PC-3 (cell line): ENCODE measurements at regions of chr9 and their contacts with region 1.

Region 1: DNA sequence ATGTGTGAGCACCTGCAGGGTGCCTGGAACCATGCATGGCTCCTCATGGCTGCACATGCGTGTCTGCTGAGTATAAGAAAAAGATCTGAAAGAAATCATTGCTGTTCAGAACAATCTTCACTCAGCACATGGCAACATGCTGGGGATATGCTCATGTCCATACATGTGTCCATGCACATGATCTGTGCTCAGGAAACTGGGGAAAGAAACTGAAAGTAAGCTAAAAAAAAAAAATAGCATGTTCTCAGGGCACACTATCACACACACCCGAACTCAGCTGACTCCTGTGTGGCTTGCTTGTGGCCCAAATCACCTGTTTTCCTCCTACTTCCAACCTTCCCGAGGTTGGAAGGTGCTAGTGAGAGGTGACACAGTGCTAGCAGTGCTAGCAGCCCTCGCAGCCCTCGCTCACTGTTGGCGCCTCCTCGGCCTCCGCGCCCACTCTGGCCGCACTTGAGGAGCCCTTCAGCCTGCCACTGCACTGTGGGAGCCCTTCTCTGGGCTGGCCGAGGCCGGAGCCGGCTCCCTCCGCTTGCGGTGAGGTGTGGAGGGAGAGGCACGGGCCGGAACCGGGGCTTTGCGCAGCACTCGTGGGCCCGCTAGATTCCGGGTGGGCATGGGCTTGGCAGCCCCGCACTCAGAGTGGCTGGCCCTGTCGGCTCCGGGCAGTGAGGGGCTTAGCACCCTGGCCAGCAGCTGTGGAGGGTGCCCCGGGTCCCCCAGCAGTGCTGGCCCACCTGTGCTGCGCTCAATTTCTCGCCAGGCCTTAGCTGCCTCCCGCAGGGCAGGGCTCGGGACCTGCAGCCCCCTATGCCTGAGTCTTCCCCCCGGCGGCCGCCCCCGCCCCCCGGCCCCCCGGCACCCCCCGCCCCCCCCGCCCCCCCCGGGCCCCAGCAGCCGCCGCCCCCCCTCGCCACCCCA is 76.0 kb downstream of the GADD45G start:
- DNase-seq: no peak
- ATAC-seq: no peak
- H3K4me3 ChIP-seq: no peak overlapping the region
- H3K27ac ChIP-seq: no peak overlapping the region
- H3K4me1 ChIP-seq: no peaks in the 10 kb centered on the region
- H3K27me3 ChIP-seq: peaks cover 47% of the 10 kb centered on the region
- CTCF ChIP-seq: no peak

Region 2: GRCh38 chr9:89706731-89707191 is 26.0 kb after region 1 on chr9:
- CTCF ChIA-PET with region 1: no interaction called
- POLR2A ChIA-PET with region 1: interaction called, 11 read pairs
- intact Hi-C with region 1: no loop called
- DNase-seq: no peak
- ATAC-seq: no peak
- H3K4me3 ChIP-seq: no peak overlapping the region
- H3K27ac ChIP-seq: no peak overlapping the region
- H3K4me1 ChIP-seq: no peaks in the 10 kb centered on the region
- H3K27me3 ChIP-seq: peaks cover 26% of the 10 kb centered on the region
- CTCF ChIP-seq: no peak